ENCODE measurements at regions of chr10 and their contacts with region 1.

Region 1: GRCh38 chr10:6401562-6402348 is 178.3 kb downstream of the PRKCQ start:
- DNase-seq: peak; percentile 84
- ATAC-seq: peak; percentile 94
- H3K4me3 ChIP-seq: peak overlapping the region; percentile 34
- H3K27ac ChIP-seq: peak overlapping the region; percentile 4
- H3K4me1 ChIP-seq: peaks cover 16% of the 10 kb centered on the region
- H3K27me3 ChIP-seq: no peaks in the 10 kb centered on the region
- CTCF ChIP-seq: peak; percentile 71

Region 2: DNA sequence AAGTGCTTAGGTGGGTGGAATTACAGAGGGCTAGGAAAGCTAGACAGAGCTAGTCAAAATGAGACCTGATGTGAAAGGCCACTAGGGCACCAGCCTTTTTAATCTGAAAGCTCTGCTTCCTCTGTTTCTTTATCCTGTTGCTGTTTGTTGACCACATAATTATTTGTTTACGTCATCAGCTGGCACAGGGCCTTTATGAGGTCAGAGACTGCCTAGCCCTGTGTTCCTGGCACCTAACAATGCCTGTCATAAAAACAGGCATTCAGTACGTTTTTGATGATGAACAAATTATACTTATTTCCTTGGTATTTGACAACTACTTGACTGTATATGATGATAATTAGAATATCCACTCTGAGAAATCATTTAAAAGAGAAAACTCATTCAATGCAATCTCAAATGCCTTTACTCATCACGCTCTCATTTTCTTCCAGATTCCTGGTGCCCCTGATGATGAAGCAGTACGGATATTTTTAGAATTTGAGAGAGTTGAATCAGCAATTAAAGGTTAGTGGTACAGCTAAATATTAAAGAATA is 286.9 kb before region 1 on chr10:
- intact Hi-C with region 1: loop called (anchors 5 kb)
- DNase-seq: no peak
- ATAC-seq: no peak
- H3K4me3 ChIP-seq: no peak overlapping the region
- H3K27ac ChIP-seq: no peak overlapping the region
- H3K4me1 ChIP-seq: peaks cover 6% of the 10 kb centered on the region
- H3K27me3 ChIP-seq: no peaks in the 10 kb centered on the region
- CTCF ChIP-seq: no peak

Region 3: GRCh38 chr10:6202684-6203330 is 198.9 kb before region 1 on chr10 and contains the start of gene PFKFB3:
- intact Hi-C with region 1: loop called (anchors 5 kb)
- DNase-seq: peak; percentile 98
- ATAC-seq: peak; percentile 94
- H3K4me3 ChIP-seq: peak within 1 kb of the TSS; percentile 88
- H3K27ac ChIP-seq: peak within 1 kb of the TSS; percentile 92
- H3K4me1 ChIP-seq: peaks cover 25% of the 10 kb centered on the region
- H3K27me3 ChIP-seq: no peaks in the 10 kb centered on the region
- CTCF ChIP-seq: peak; percentile 98
- total RNA-seq, gene PFKFB3: 77.2 TPM